ENCODE measurements at regions of chr12 and their contacts with region 1.

Region 1: DNA sequence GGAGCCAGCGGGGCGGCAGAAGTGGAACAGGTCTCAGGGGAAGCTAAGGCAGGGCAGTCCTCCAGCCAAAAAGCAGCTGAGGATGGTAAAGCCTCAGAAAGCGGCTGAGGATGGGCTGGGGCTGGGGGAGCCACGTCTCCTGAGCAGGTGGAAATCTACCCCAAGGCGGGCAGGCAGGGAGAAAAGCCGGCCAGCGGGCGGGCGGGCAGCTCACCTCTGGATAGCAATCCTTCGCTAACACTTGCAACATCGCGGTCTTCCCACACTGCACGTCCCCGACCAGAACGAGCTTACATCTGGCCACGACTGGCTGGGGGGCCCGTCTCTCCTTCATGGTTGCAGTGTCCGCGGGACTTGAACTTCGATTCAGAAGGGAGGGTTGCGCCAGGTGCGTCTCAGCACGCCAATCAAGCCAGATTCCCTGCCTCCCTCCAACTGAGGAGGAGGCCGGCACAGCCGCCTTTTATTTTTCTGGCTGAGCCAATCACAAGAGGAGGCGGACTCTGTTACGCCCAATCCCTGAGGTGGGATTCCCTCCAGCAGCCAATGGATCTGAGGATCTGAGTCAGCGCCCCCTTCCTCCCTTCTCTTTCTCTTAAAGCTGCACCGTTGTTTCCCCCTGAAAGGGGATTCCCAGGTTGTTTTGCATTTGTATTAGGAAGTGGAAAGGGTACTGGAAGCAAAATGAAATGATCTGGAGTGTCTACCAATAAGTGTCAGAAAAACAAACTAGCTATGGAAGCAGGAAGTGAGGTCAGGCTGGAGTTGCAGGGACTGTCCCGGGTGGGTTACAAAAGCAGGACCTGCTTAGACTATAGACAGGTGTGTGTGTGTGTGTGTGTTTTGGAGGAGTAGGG is at the start of gene RND1:
- DNase-seq: peak; percentile 80 to 93
- ATAC-seq: peak; percentile 94 to 100 (median 99)
- H3K4me3 ChIP-seq: peak within 1 kb of the TSS; percentile 49 to 92 (median 60)
- H3K27ac ChIP-seq: peak within 1 kb of the TSS in 4 of 10 donors; percentile 31 to 58 (median 48)
- H3K4me1 ChIP-seq: peaks cover 0 to 15% (median 6%) of the 10 kb centered on the region in 9 donors
- H3K27me3 ChIP-seq: peaks cover 0 to 33% (median 0%) of the 10 kb centered on the region in 7 donors
- CTCF ChIP-seq: peak in 3 of 9 donors; percentile 24 to 36 (median 32)
- total RNA-seq, gene RND1: 0.21 to 3.3 (median 0.95) TPM

Region 2: DNA sequence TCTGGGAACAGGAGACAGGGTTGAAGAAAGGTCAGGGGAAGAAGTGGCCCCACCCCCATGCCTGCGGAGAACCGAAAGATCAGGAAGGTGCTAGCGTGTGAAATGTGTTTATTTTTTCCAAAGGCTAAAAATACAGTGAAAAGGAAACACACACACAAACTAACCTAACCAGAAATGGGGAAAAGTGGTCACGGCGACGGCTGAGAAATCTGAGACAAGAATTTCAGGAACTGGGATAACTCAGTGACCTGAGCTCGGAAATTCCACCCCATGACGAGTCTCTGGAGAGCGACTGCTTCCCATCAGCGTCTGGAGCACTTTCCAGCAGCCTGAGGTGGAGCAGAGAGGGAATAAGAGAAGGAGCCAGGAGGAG is 16.6 kb after region 1 on chr12:
- intact Hi-C with region 1: loop called in 1 of 10 experiments (anchors 2 kb)
- DNase-seq: peak in 1 of 2 donors; percentile 49
- ATAC-seq: peak; percentile 44 to 88 (median 62)
- H3K4me3 ChIP-seq: peak overlapping the region in 6 of 10 donors; percentile 24 to 40 (median 32)
- H3K27ac ChIP-seq: peak overlapping the region in 6 of 10 donors; percentile 19 to 72 (median 58)
- H3K4me1 ChIP-seq: peaks cover 0 to 28% (median 14%) of the 10 kb centered on the region in 9 donors
- H3K27me3 ChIP-seq: peaks cover 0 to 34% (median 5%) of the 10 kb centered on the region in 7 donors
- CTCF ChIP-seq: no peak

Measured in heart right ventricle (tissue), 16 donors.